Tibial artery (tissue), 4 donors: ENCODE measurements at regions of chr5 and their contacts with region 1.

Region 1: DNA sequence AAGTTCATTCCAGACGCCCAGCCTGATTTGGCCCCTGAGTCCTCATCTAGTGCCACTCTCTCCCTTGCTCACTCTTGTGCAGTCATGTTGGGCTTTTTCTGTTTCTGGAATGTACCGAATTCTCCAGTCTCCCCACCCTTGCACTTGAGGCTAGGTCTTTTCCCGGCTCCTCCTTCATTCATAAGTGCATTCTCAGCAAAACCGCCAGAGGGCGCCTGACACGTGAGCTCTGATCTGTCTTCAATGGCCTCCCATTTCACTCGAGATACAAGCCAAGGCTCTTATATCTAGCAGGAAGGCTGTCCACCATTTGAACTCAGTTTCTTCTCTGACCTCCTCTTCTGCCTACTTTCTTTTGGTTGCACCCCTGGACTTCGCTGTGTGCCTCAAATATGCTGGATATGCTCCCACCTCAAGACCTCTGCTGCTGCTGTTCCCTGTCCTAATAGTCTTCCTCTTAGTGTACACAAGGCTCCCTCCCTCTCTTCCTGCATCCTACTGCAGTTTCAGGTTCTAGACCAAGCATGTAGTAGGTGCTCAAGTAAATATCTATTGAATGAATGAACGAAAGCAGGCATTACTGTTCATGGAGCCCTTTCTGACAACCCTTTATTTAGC is 568.1 kb upstream of the WWC1 start:
- DNase-seq: peak; percentile 71 to 75
- H3K4me3 ChIP-seq: no peak overlapping the region
- H3K27ac ChIP-seq: no peak overlapping the region
- H3K4me1 ChIP-seq: peaks cover 0 to 5% (median 2%) of the 10 kb centered on the region in 4 donors
- H3K27me3 ChIP-seq: peaks cover 0 to 6% of the 10 kb centered on the region in 2 donors
- CTCF ChIP-seq: peak; percentile 79 to 85

Region 2: GRCh38 chr5:168015506-168015905 is 292.1 kb after region 1 on chr5:
- intact Hi-C with region 1: loop called (anchors 10 kb)
- DNase-seq: no peak
- H3K4me3 ChIP-seq: no peak overlapping the region
- H3K27ac ChIP-seq: no peak overlapping the region
- H3K4me1 ChIP-seq: no peaks in the 10 kb centered on the region
- H3K27me3 ChIP-seq: peaks cover 0 to 2% of the 10 kb centered on the region in 2 donors
- CTCF ChIP-seq: no peak

Region 3: GRCh38 chr5:168219515-168220410 is 496.4 kb after region 1 on chr5:
- intact Hi-C with region 1: loop called (anchors 5 kb)
- DNase-seq: no peak
- H3K4me3 ChIP-seq: no peak overlapping the region
- H3K27ac ChIP-seq: no peak overlapping the region
- H3K4me1 ChIP-seq: peaks cover 0 to 5% (median 2%) of the 10 kb centered on the region in 4 donors
- H3K27me3 ChIP-seq: peaks cover 0 to 16% of the 10 kb centered on the region in 2 donors
- CTCF ChIP-seq: peak; percentile 82 to 87